Activated CD4-positive, alpha-beta T cell treated with anti-CD3 and anti-CD28 coated beads for 36 hours (primary cell): ENCODE measurements at regions of chr2 and their contacts with region 1.

Region 1: GRCh38 chr2:60818272-60818671 is 62.2 kb downstream of the PAPOLG start:
- DNase-seq: peak; percentile 76
- ATAC-seq: peak; percentile 60
- H3K4me3 Mint-ChIP-seq: peak overlapping the region; percentile 29
- H3K27ac Mint-ChIP-seq: peak overlapping the region; percentile 82
- H3K4me1 Mint-ChIP-seq: peaks cover 57% of the 10 kb centered on the region
- H3K27me3 Mint-ChIP-seq: no peaks in the 10 kb centered on the region

Region 2: GRCh38 chr2:60764736-60765534 is 53.3 kb before region 1 on chr2:
- CTCF ChIA-PET with region 1: no interaction called
- POLR2A ChIA-PET with region 1: no interaction called
- intact Hi-C with region 1: no loop called
- DNase-seq: no peak
- ATAC-seq: peak; percentile 36
- H3K4me3 Mint-ChIP-seq: no peak overlapping the region
- H3K27ac Mint-ChIP-seq: no peak overlapping the region
- H3K4me1 Mint-ChIP-seq: peaks cover 39% of the 10 kb centered on the region
- H3K27me3 Mint-ChIP-seq: no peaks in the 10 kb centered on the region

Region 3: GRCh38 chr2:60832621-60833020 is 14.3 kb after region 1 on chr2:
- CTCF ChIA-PET with region 1: interaction called, 21 read pairs
- POLR2A ChIA-PET with region 1: interaction called, 10 read pairs
- intact Hi-C with region 1: loop called in 1 of 2 experiments (anchors 1 kb)
- DNase-seq: no peak
- ATAC-seq: peak; percentile 89
- H3K4me3 Mint-ChIP-seq: no peak overlapping the region
- H3K27ac Mint-ChIP-seq: peak overlapping the region; percentile 80
- H3K4me1 Mint-ChIP-seq: peaks cover 41% of the 10 kb centered on the region
- H3K27me3 Mint-ChIP-seq: peaks cover 4% of the 10 kb centered on the region

Region 4: DNA sequence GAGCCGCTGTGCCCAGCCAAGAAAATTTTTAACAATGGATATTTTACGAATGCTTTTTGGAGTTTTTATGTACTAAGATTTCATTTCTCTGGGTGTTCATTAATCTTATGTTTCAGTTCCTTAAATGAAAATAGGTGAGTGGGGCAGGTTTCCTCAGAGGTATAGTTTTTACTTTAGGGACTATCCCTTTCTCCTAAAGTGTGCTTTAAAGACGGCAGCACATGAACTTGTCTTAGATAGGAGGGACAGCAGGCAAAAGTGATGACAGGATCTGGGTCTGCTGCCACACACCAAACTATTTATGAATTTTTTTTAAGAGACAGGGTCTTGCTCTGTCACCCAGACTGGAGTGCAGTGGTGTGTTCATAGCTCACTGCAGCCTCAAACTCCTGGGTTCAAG is 55.1 kb after region 1 on chr2:
- CTCF ChIA-PET with region 1: interaction called, 4 read pairs
- POLR2A ChIA-PET with region 1: interaction called, 5 read pairs
- intact Hi-C with region 1: loop called (anchors 1 kb)
- DNase-seq: peak; percentile 42
- ATAC-seq: peak; percentile 60
- H3K4me3 Mint-ChIP-seq: peak overlapping the region; percentile 25
- H3K27ac Mint-ChIP-seq: peak overlapping the region; percentile 85
- H3K4me1 Mint-ChIP-seq: peaks cover 31% of the 10 kb centered on the region
- H3K27me3 Mint-ChIP-seq: no peaks in the 10 kb centered on the region

Region 5: DNA sequence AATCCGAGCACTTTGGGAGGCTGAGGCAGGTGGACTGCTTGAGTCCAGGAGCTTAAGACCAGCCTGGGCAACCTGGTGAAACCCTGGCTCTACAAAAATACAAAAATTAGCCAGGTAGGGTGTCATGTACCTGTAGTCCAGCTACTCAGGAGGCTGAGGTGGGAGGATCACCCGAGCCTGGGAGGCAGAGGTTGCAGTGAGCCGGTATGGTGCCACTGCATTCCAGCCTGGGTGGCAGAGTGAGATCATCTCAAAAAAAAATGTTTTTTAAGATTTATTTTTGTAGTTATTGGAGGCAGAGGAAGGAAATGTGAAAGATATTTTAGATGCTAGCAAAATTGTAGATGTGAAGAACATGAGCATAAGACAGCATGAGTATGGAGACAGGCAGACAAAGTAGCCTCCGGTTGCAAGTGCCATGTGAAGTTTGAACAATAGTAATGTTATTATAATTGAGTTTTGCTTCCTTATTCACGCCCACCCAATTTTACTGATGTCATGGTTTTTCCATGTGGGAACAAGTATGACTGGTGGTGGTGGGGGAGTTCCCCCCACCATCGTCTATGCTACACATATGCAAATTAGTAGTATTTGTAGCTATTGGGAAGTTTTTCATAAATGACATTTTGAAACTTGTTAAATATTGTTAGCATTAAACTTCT is 81.1 kb after region 1 on chr2:
- CTCF ChIA-PET with region 1: interaction called, 3 read pairs
- POLR2A ChIA-PET with region 1: no interaction called
- intact Hi-C with region 1: loop called in 1 of 2 experiments (anchors 1 kb)
- DNase-seq: peak; percentile 74
- ATAC-seq: peak; percentile 86
- H3K4me3 Mint-ChIP-seq: peak overlapping the region; percentile 35
- H3K27ac Mint-ChIP-seq: peak overlapping the region; percentile 79
- H3K4me1 Mint-ChIP-seq: peaks cover 46% of the 10 kb centered on the region
- H3K27me3 Mint-ChIP-seq: no peaks in the 10 kb centered on the region